MCF 10A (cell line): ENCODE measurements at regions of chr6 and their contacts with region 1.

Region 1: GRCh38 chr6:79949233-79949632 is 1.9 kb upstream of the ELOVL4 start:
- DNase-seq: peak; percentile 79
- H3K4me3 Mint-ChIP-seq: no peak overlapping the region
- H3K27ac Mint-ChIP-seq: no peak overlapping the region
- H3K4me1 Mint-ChIP-seq: peaks cover 14% of the 10 kb centered on the region
- H3K27me3 Mint-ChIP-seq: no peaks in the 10 kb centered on the region
- CTCF ChIP-seq: peak; percentile 51

Region 2: GRCh38 chr6:79657238-79657637 is 292.0 kb before region 1 on chr6:
- CTCF ChIA-PET with region 1: no interaction called
- POLR2A ChIA-PET with region 1: no interaction called
- intact Hi-C with region 1: no loop called
- DNase-seq: no peak
- H3K4me3 Mint-ChIP-seq: no peak overlapping the region
- H3K27ac Mint-ChIP-seq: no peak overlapping the region
- H3K4me1 Mint-ChIP-seq: peaks cover 13% of the 10 kb centered on the region
- H3K27me3 Mint-ChIP-seq: no peaks in the 10 kb centered on the region
- CTCF ChIP-seq: no peak

Region 3: DNA sequence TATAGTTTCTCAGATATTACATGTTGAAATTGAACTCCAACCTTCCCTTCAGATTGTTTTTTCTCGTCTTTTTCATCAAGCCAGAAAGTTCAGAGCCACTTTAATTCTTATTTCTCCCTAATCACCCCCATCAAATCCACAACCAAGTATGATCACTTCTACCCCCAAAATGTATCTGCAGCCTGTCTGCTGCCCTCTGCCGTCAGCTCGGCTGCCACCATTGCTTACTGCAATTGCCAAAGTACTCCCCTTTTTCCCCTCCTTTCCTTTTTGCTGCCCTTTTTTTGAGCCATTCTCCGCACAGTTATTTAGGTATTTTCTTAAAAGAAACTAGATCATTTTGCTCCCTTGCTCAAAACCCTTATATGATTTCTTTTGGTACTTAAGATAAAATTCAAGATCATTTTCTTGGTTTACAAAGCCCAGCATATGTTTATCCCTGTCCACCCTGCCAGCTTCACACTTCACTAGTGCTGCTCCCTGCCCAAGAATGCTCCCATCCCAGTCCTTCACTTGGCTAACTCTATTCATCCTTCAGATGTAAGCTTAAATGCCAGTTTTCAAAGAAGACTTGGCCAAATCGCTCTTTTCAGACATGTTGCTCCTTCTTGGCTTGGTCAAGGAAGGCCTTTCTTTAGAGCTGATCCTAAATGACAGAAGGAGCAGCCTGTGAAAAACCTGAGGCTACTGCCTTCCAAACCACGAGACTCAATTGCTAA is 254.4 kb before region 1 on chr6:
- CTCF ChIA-PET with region 1: no interaction called
- POLR2A ChIA-PET with region 1: no interaction called
- intact Hi-C with region 1: no loop called
- DNase-seq: no peak
- H3K4me3 Mint-ChIP-seq: no peak overlapping the region
- H3K27ac Mint-ChIP-seq: no peak overlapping the region
- H3K4me1 Mint-ChIP-seq: no peaks in the 10 kb centered on the region
- H3K27me3 Mint-ChIP-seq: no peaks in the 10 kb centered on the region
- CTCF ChIP-seq: no peak

Region 4: DNA sequence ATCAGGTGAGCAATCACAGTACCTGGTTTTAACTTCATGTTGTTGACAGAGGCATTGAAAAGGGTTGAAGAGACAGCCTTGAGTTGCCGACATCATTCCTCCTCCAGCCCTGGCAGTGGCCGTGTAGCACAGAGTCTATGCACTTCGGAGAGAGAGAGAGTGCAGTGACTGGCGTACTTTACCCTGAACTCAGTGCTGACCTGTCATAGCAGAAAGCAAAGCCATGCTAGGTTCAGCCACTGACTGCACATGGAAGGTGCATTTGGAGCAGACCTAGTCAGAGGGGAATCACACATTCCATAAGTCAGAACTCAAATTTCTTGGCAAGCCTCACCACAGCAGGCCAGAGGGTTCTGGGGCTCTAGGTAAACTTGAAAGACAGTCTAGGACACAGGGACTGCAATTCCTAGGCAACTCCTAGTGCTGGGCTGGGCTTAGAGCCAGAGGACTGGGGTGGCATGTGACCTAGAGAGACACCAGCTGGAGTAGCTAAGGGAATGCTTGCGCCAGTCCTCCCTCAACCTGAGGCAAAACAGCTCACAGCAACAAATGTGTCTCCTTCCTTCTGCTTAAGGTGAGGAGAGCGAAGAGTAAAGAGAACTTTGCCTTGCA is 71.0 kb before region 1 on chr6:
- CTCF ChIA-PET with region 1: interaction called, 9 read pairs
- POLR2A ChIA-PET with region 1: interaction called, 23 read pairs
- intact Hi-C with region 1: no loop called
- DNase-seq: peak; percentile 75
- H3K4me3 Mint-ChIP-seq: no peak overlapping the region
- H3K27ac Mint-ChIP-seq: no peak overlapping the region
- H3K4me1 Mint-ChIP-seq: peaks cover 33% of the 10 kb centered on the region
- H3K27me3 Mint-ChIP-seq: no peaks in the 10 kb centered on the region
- CTCF ChIP-seq: no peak

Region 5: GRCh38 chr6:79984261-79984660 is 35.0 kb after region 1 on chr6:
- CTCF ChIA-PET with region 1: interaction called, 15 read pairs
- POLR2A ChIA-PET with region 1: interaction called, 4 read pairs
- intact Hi-C with region 1: loop called (anchors 1 kb)
- DNase-seq: peak; percentile 26
- H3K4me3 Mint-ChIP-seq: no peak overlapping the region
- H3K27ac Mint-ChIP-seq: no peak overlapping the region
- H3K4me1 Mint-ChIP-seq: no peaks in the 10 kb centered on the region
- H3K27me3 Mint-ChIP-seq: no peaks in the 10 kb centered on the region
- CTCF ChIP-seq: no peak

Region 6: GRCh38 chr6:80004173-80005072 is 55.2 kb after region 1 on chr6 and contains the start of gene TTK:
- CTCF ChIA-PET with region 1: no interaction called
- POLR2A ChIA-PET with region 1: interaction called, 5 read pairs
- intact Hi-C with region 1: loop called (anchors 1 kb)
- DNase-seq: peak; percentile 96
- H3K4me3 Mint-ChIP-seq: peak within 1 kb of the TSS; percentile 96
- H3K27ac Mint-ChIP-seq: peak within 1 kb of the TSS; percentile 78
- H3K4me1 Mint-ChIP-seq: peaks cover 40% of the 10 kb centered on the region
- H3K27me3 Mint-ChIP-seq: no peaks in the 10 kb centered on the region
- CTCF ChIP-seq: no peak
- total RNA-seq, gene TTK: 11.9 and 19.1 TPM in 2 replicates

Region 7: DNA sequence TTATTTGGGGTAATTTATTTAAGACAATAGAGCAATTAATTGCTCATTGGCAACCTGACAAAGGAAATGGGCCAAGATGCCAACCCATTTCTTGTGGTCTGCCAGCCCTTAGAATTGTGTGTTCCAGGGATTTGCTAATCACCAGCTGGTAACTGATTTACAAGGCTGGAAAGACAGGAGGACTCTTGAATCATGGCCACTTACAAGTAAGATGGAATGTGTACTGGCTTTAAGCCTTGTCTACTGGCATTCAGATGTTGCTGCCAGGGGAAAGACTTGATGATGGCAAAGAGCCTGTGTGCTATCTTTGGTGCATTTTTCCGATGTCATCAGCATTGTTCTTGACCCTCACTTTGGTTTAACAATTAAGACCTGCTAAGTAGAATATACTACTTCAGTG is 248.2 kb after region 1 on chr6:
- CTCF ChIA-PET with region 1: no interaction called
- POLR2A ChIA-PET with region 1: no interaction called
- intact Hi-C with region 1: no loop called
- DNase-seq: peak; percentile 34
- H3K4me3 Mint-ChIP-seq: no peak overlapping the region
- H3K27ac Mint-ChIP-seq: no peak overlapping the region
- H3K4me1 Mint-ChIP-seq: peaks cover 7% of the 10 kb centered on the region
- H3K27me3 Mint-ChIP-seq: no peaks in the 10 kb centered on the region
- CTCF ChIP-seq: no peak